GM12878 (cell line): ENCODE measurements at regions of chr2 and their contacts with region 1.

Region 1: GRCh38 chr2:38581193-38582147 is 21.3 kb downstream of the HNRNPLL start:
- DNase-seq: peak; percentile 23
- ATAC-seq: peak; percentile 92
- H3K4me3 ChIP-seq: no peak overlapping the region
- H3K27ac ChIP-seq: no peak overlapping the region
- H3K4me1 ChIP-seq: no peaks in the 10 kb centered on the region
- H3K27me3 ChIP-seq: no peaks in the 10 kb centered on the region
- CTCF ChIP-seq: peak; percentile 47 to 73 (median 60); a peak in 5 of 6 replicates
- EP300 ChIP-seq: no peak
- POLR2A ChIP-seq: no peak
- RAD21 ChIP-seq: peak; percentile 88

Region 2: GRCh38 chr2:38554973-38555595 is 26.4 kb before region 1 on chr2:
- CTCF ChIA-PET with region 1: interaction called, 14 read pairs
- POLR2A ChIA-PET with region 1: interaction called, 3 read pairs
- RAD21 ChIA-PET with region 1: interaction called, 11 read pairs
- SMC1A ChIA-PET with region 1: interaction called, 10 read pairs
- in situ Hi-C with region 1: no loop called
- intact Hi-C with region 1: no loop called
- DNase-seq: no peak
- ATAC-seq: peak; percentile 76
- H3K4me3 ChIP-seq: no peak overlapping the region
- H3K27ac ChIP-seq: no peak overlapping the region
- H3K4me1 ChIP-seq: no peaks in the 10 kb centered on the region
- H3K27me3 ChIP-seq: no peaks in the 10 kb centered on the region
- CTCF ChIP-seq: peak; percentile 32 to 54 (median 46); a peak in 5 of 6 replicates
- EP300 ChIP-seq: no peak
- POLR2A ChIP-seq: no peak
- RAD21 ChIP-seq: peak; percentile 38

Region 3: GRCh38 chr2:38610851-38611801 is 29.7 kb after region 1 on chr2:
- CTCF ChIA-PET with region 1: interaction called, 174 read pairs
- POLR2A ChIA-PET with region 1: interaction called, 3 read pairs
- RAD21 ChIA-PET with region 1: interaction called, 12 read pairs
- SMC1A ChIA-PET with region 1: interaction called, 13 read pairs
- in situ Hi-C with region 1: no loop called
- intact Hi-C with region 1: no loop called
- DNase-seq: peak; percentile 52
- ATAC-seq: peak; percentile 87
- H3K4me3 ChIP-seq: no peak overlapping the region
- H3K27ac ChIP-seq: no peak overlapping the region
- H3K4me1 ChIP-seq: peaks cover 26% of the 10 kb centered on the region
- H3K27me3 ChIP-seq: no peaks in the 10 kb centered on the region; a peak in 1 of 4 replicates
- CTCF ChIP-seq: no peak
- EP300 ChIP-seq: peak; percentile 39 to 86; a peak in 2 of 4 replicates
- POLR2A ChIP-seq: no peak
- RAD21 ChIP-seq: no peak

Region 4: GRCh38 chr2:38720613-38721241 is 139.3 kb after region 1 on chr2:
- CTCF ChIA-PET with region 1: interaction called, 370 read pairs
- POLR2A ChIA-PET with region 1: interaction called, 3 read pairs
- RAD21 ChIA-PET with region 1: interaction called, 134 read pairs
- SMC1A ChIA-PET with region 1: interaction called, 201 read pairs
- in situ Hi-C with region 1: no loop called
- intact Hi-C with region 1: no loop called
- DNase-seq: peak; percentile 40
- ATAC-seq: peak; percentile 56
- H3K4me3 ChIP-seq: no peak overlapping the region
- H3K27ac ChIP-seq: no peak overlapping the region
- H3K4me1 ChIP-seq: peaks cover 33% of the 10 kb centered on the region
- H3K27me3 ChIP-seq: no peaks in the 10 kb centered on the region
- CTCF ChIP-seq: no peak
- EP300 ChIP-seq: no peak; a peak in 1 of 4 replicates
- POLR2A ChIP-seq: no peak
- RAD21 ChIP-seq: no peak

Region 5: GRCh38 chr2:38740851-38741731 is 159.6 kb after region 1 on chr2:
- CTCF ChIA-PET with region 1: interaction called, 370 read pairs
- POLR2A ChIA-PET with region 1: no interaction called
- RAD21 ChIA-PET with region 1: interaction called, 47 read pairs
- SMC1A ChIA-PET with region 1: interaction called, 48 read pairs
- in situ Hi-C with region 1: no loop called
- intact Hi-C with region 1: loop called (anchors 2 kb)
- DNase-seq: no peak
- ATAC-seq: peak; percentile 10
- H3K4me3 ChIP-seq: no peak overlapping the region
- H3K27ac ChIP-seq: no peak overlapping the region
- H3K4me1 ChIP-seq: no peaks in the 10 kb centered on the region
- H3K27me3 ChIP-seq: no peaks in the 10 kb centered on the region
- CTCF ChIP-seq: peak in 2 of 3 experiments; percentile 40 to 41; a peak in 4 of 6 replicates
- EP300 ChIP-seq: no peak
- POLR2A ChIP-seq: no peak; the same call in 1 of the 2 replicates
- RAD21 ChIP-seq: peak; percentile 41

Region 6: DNA sequence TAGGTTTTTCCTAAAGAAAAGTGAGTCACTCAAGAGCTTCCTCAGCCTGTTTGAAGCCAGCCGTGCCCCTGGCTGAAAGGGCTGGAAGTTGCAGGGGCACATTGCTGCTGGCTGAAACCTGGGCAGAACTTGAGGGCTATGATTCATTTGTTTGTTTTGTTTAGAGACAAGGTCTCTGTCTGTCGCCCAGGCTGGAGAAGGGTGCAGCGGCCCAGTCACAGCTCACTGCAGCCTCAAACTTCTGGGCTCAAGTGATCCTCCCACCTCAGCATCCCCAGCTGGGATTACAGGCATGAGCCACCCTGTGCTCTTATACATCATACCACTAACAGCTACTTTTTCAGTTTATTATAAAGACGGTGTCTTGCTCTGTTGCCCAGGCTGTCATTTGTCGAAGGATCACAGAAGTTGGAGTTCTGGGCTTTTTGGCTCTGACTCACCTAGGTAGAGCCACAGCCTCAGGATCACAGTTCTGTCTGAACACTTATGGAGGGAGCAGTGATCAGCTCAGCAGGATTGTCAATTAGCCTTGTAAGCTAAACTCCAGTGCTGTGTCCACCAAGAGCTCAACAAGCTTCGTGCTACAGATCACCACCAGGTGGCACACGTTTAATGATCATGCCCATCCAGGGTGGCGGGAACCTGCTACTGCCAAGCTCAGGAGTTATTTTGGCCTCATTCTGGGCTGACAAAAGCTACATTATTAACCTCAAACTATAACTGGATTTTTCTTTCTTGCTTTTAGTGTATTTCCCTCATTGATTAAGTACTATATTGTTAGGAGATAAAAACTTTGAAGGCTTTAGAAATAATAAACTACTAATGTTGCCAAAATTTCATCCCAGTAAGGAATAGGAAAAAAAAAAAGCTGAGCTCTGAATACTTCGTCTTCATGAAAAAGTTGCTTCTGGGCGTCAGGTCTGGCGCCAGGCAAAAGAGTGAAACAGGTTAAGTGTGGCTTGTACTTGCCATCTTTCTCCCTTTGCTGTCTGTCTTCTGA is 366.1 kb after region 1 on chr2:
- CTCF ChIA-PET with region 1: interaction called, 12 read pairs
- POLR2A ChIA-PET with region 1: no interaction called
- RAD21 ChIA-PET with region 1: interaction called, 9 read pairs
- SMC1A ChIA-PET with region 1: interaction called, 4 read pairs
- in situ Hi-C with region 1: no loop called
- intact Hi-C with region 1: no loop called
- DNase-seq: peak; percentile 16
- ATAC-seq: peak; percentile 98
- H3K4me3 ChIP-seq: no peak overlapping the region
- H3K27ac ChIP-seq: no peak overlapping the region
- H3K4me1 ChIP-seq: no peaks in the 10 kb centered on the region
- H3K27me3 ChIP-seq: no peaks in the 10 kb centered on the region
- CTCF ChIP-seq: peak; percentile 72 to 77 (median 74)
- EP300 ChIP-seq: no peak
- POLR2A ChIP-seq: no peak
- RAD21 ChIP-seq: peak; percentile 74